ENCODE measurements at regions of chr13 and their contacts with region 1.

Region 1: DNA sequence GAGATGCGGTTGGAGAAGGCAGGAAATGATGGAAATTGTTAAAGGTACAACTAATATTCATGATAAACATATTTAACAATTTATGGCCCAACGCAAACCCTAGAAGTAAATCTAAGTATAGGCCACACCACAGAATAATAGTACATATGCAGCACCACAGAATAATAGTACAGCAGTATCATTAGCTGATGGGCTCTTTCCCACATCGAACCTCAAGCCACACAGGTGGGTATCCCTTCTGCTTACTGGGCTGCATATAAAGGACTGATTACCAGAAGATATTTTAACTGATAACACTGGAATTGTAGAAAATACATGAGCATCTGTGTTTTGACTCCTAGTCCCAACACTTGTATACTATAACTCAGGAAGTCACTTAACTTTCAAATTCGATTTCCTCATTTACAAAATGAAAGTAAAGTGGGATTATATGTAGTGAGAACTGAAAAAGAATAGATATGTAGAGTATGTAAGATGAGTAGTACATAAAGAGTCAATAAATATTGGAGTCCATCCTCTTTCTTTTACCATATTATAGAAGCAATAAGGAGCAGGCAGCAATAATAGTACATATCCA is 91.5 kb downstream of the TSC22D1 start:
- DNase-seq: no peak
- H3K4me3 ChIP-seq: no peak overlapping the region
- H3K4me3 Mint-ChIP-seq: no peak overlapping the region
- H3K27ac Mint-ChIP-seq: no peak overlapping the region
- H3K4me1 ChIP-seq: no peaks in the 10 kb centered on the region
- H3K4me1 Mint-ChIP-seq: peaks cover 8% of the 10 kb centered on the region
- H3K27me3 ChIP-seq: no peaks in the 10 kb centered on the region
- H3K27me3 Mint-ChIP-seq: no peaks in the 10 kb centered on the region
- CTCF ChIP-seq: no peak

Region 2: DNA sequence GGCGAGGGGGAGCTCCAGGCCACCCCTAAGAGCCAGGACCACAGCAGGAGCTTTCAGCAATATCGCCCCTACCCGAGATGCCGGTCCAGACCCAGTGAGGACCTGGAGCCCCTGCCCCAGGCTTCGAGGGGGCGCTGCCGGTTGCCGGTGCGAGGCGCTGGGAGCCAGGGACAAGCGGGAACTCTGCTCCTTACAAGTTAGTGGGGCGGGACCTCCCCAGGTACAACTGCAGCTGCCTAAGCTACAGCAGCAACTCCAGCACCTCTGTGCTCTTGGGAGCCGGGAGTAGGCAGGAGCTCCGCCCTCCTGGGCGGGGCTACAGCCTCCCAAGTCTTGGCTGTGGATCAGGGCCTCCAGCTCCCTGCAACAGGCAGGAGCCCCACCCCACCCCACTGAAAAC is 106.7 kb after region 1 on chr13:
- CTCF ChIA-PET with region 1: no interaction called
- POLR2A ChIA-PET with region 1: no interaction called
- intact Hi-C with region 1: no loop called
- DNase-seq: no peak
- H3K4me3 ChIP-seq: no peak overlapping the region
- H3K4me3 Mint-ChIP-seq: no peak overlapping the region
- H3K27ac Mint-ChIP-seq: no peak overlapping the region
- H3K4me1 ChIP-seq: no peaks in the 10 kb centered on the region
- H3K4me1 Mint-ChIP-seq: peaks cover 7% of the 10 kb centered on the region
- H3K27me3 ChIP-seq: no peaks in the 10 kb centered on the region
- H3K27me3 Mint-ChIP-seq: peaks cover 3% of the 10 kb centered on the region
- CTCF ChIP-seq: no peak

Region 3: GRCh38 chr13:44648392-44649103 is 163.9 kb after region 1 on chr13:
- CTCF ChIA-PET with region 1: no interaction called
- POLR2A ChIA-PET with region 1: no interaction called
- intact Hi-C with region 1: loop called (anchors 10 kb)
- DNase-seq: peak in 1 of 2 experiments; percentile 12
- H3K4me3 ChIP-seq: no peak overlapping the region
- H3K4me3 Mint-ChIP-seq: no peak overlapping the region
- H3K27ac Mint-ChIP-seq: no peak overlapping the region
- H3K4me1 ChIP-seq: no peaks in the 10 kb centered on the region
- H3K4me1 Mint-ChIP-seq: no peaks in the 10 kb centered on the region
- H3K27me3 ChIP-seq: no peaks in the 10 kb centered on the region
- H3K27me3 Mint-ChIP-seq: no peaks in the 10 kb centered on the region
- CTCF ChIP-seq: peak; percentile 29 to 38

Region 4: GRCh38 chr13:44879463-44880058 is 394.9 kb after region 1 on chr13:
- CTCF ChIA-PET with region 1: no interaction called
- POLR2A ChIA-PET with region 1: no interaction called
- intact Hi-C with region 1: loop called (anchors 1 kb)
- DNase-seq: peak; percentile 39 to 52
- H3K4me3 ChIP-seq: no peak overlapping the region
- H3K4me3 Mint-ChIP-seq: no peak overlapping the region
- H3K27ac Mint-ChIP-seq: no peak overlapping the region
- H3K4me1 ChIP-seq: no peaks in the 10 kb centered on the region
- H3K4me1 Mint-ChIP-seq: no peaks in the 10 kb centered on the region
- H3K27me3 ChIP-seq: no peaks in the 10 kb centered on the region
- H3K27me3 Mint-ChIP-seq: no peaks in the 10 kb centered on the region
- CTCF ChIP-seq: peak; percentile 47 to 48

Region 5: GRCh38 chr13:44969551-44970484 is 485.2 kb after region 1 on chr13:
- CTCF ChIA-PET with region 1: interaction called, 6 read pairs
- POLR2A ChIA-PET with region 1: no interaction called
- intact Hi-C with region 1: loop called (anchors 1 kb)
- DNase-seq: peak in 1 of 2 experiments; percentile 62
- H3K4me3 ChIP-seq: no peak overlapping the region
- H3K4me3 Mint-ChIP-seq: no peak overlapping the region
- H3K27ac Mint-ChIP-seq: no peak overlapping the region
- H3K4me1 ChIP-seq: peaks cover 14% of the 10 kb centered on the region
- H3K4me1 Mint-ChIP-seq: peaks cover 14% of the 10 kb centered on the region
- H3K27me3 ChIP-seq: no peaks in the 10 kb centered on the region
- H3K27me3 Mint-ChIP-seq: no peaks in the 10 kb centered on the region
- CTCF ChIP-seq: peak; percentile 74 to 81